Posterior vena cava (tissue), 2 donors: ENCODE measurements at regions of chr11 and their contacts with region 1.

Region 1: DNA sequence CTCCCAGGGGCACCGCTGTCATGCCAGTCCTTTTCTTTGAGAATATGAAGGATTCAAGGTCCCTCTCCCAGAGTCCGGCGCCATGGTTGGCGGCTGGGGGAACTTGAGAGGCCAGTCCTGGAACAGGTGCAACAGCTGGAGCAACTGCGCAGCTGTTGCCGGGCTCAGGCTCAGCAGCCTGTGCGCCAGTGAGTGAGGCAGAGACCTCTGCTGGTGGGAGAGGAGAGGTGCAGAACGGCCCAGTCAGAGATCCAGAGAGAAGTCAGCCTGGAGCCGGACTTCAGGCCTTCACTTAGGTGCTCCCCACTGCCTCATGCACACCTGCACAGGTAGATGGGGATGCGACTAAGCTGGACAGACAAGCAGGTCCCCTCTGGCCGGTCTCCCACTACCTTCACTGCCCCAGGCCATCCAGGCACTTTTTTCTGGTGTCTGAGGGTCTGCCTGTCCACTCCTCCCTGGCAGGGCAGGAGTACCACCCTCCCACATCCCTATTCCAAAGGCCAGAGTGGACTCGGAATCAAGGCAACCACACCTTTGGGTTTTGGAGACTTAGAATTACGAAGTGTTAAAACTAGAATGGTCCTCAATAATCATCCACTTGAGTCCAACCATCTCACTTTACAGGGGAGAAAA is 4.6 kb downstream of the CHRDL2 start:
- DNase-seq: peak; percentile 87

Region 2: DNA sequence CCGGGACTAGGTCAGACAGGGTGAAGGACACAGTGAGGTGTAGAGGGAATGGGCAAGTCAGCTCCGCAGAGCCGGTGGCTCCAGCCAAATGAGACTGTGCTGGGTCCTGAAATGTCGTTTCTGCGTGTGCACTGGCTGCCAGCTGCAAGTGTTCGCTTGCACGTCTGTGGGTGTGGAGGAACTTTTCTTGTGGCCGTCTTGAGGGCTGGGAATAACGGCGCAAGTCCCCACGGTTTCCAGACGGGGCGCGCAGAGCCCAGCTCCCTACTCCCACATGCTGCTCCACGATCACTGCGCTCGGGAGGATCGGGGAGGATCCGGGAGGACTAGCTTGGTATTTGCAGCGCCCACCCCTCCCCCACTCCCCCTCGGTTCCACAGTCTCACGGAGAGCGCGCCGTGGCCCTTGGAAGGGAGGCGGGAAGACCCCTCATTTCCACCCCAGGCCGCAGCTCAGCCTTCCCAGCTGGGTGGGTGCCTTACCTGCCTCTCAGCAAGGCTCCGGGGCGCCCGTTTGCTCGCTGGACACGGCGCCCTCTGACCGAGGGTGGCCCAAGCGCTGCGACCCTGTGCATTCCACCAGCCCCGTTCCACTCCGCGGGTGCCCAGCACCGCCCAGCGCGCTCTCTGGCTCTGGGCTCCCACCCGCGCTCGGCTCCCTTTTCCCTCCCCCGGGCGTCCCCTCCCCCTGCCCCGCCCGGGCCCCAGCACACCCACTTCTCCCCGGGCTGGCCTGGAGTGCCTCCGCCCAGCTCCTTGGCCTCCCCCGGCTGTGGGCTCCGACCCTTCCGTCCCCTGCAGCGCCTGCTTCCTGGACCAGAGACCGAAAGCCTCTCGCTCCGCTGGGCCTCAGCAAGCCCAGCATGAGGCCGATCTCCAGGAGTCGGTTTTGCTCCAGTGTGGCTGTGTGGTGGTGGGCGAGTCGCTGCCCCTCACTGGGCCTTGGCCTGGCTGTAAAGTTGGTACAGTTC is 259.5 kb before region 1 on chr11 and contains the start of gene KCNE3:
- intact Hi-C with region 1: loop called in 1 of 2 experiments (anchors 10 kb)
- DNase-seq: peak; percentile 84
- total RNA-seq, gene KCNE3: 2.6 to 7.3 TPM

Region 3: DNA sequence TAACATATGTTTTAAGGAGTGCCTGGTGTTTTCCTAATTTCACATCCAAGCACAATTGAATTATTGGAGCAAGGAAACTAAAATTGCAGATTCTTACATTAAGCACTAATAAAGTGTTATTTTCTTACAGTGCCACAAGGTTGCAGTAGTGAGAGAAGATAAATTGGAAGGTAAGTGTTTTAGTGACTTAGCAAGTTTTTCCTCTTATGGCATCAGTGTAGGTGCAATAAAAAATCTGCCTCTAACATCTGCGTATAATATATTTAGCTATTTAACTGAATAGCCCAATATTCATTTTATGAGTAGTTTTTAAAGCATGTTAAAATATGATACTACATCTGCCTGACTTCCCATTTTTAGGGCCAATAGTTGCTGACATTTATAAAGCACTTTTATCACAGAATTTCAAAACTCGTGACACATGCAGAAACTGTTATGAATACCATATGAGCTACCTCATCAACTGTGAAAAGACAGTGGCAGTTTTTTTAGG is 115.2 kb before region 1 on chr11:
- intact Hi-C with region 1: loop called (anchors 5 to 10 kb)
- DNase-seq: no peak

Region 4: GRCh38 chr11:74769055-74769707 is 42.5 kb after region 1 on chr11:
- intact Hi-C with region 1: no loop called
- DNase-seq: no peak

Region 5: GRCh38 chr11:75004215-75004614 is 277.6 kb after region 1 on chr11:
- intact Hi-C with region 1: no loop called
- DNase-seq: no peak